Activated naive CD4-positive, alpha-beta T cell treated with anti-CD3 and anti-CD28 coated beads for 36 hours (primary cell): ENCODE measurements at regions of chr14 and their contacts with region 1.

Region 1: GRCh38 chr14:77023001-77023996 is 5.2 kb downstream of the IRF2BPL start:
- DNase-seq: peak; percentile 73
- H3K4me3 Mint-ChIP-seq: peak overlapping the region; percentile 26
- H3K27ac Mint-ChIP-seq: peak overlapping the region; percentile 86
- H3K4me1 Mint-ChIP-seq: peaks cover 49% of the 10 kb centered on the region
- H3K27me3 Mint-ChIP-seq: no peaks in the 10 kb centered on the region

Region 2: DNA sequence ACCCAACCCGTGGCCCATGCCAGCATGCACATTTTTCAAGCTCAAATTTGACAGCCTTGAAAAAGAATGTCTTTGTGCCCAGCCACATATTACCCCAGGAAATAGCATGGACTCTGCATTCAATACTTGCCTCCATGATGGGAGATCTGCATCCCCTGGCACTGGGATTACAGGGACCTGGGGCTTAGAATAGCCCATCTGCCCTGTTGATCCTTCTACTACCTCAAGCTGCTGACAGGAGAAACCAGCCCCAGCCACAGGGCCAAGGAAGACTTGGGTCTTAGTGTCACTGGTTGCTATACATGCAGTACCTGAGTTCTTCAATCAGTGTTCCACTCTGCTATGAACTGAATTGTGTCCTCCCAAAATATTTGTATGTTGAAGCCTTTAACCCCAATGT is 111.8 kb before region 1 on chr14:
- CTCF ChIA-PET with region 1: interaction called, 60 read pairs
- intact Hi-C with region 1: no loop called
- DNase-seq: no peak
- H3K4me3 Mint-ChIP-seq: no peak overlapping the region
- H3K27ac Mint-ChIP-seq: no peak overlapping the region
- H3K4me1 Mint-ChIP-seq: peaks cover 15% of the 10 kb centered on the region
- H3K27me3 Mint-ChIP-seq: no peaks in the 10 kb centered on the region

Region 3: DNA sequence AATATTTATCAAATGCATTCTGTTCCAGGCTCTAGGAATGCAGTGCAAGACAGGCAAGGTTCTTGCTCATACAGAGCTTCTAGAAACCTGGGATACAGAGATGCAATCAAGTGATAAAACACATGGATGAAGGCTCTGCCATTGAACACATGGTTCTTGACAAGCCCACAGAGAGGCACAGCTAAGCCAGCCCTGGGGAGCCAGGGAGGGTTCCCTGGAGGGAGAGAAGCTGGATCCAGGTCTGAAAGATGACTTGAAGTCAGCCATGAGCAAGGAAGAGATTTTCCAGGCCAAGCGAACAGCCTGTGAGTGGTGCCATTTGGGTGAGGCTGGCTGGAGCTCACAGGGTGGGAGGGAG is 61.0 kb before region 1 on chr14:
- CTCF ChIA-PET with region 1: interaction called, 16 read pairs
- intact Hi-C with region 1: loop called (anchors 1 kb)
- DNase-seq: no peak
- H3K4me3 Mint-ChIP-seq: peak overlapping the region; percentile 68
- H3K27ac Mint-ChIP-seq: peak overlapping the region; percentile 98
- H3K4me1 Mint-ChIP-seq: peaks cover 90% of the 10 kb centered on the region
- H3K27me3 Mint-ChIP-seq: no peaks in the 10 kb centered on the region

Region 4: GRCh38 chr14:76977793-76978720 is 45.2 kb before region 1 on chr14:
- CTCF ChIA-PET with region 1: interaction called, 3 read pairs
- intact Hi-C with region 1: loop called (anchors 1 kb)
- DNase-seq: peak; percentile 97
- H3K4me3 Mint-ChIP-seq: peak overlapping the region; percentile 71
- H3K27ac Mint-ChIP-seq: peak overlapping the region; percentile 95
- H3K4me1 Mint-ChIP-seq: peaks cover 28% of the 10 kb centered on the region
- H3K27me3 Mint-ChIP-seq: no peaks in the 10 kb centered on the region

Region 5: GRCh38 chr14:76995279-76996005 is 27.9 kb before region 1 on chr14:
- CTCF ChIA-PET with region 1: no interaction called
- intact Hi-C with region 1: loop called (anchors 2 kb)
- DNase-seq: peak; percentile 59
- H3K4me3 Mint-ChIP-seq: no peak overlapping the region
- H3K27ac Mint-ChIP-seq: peak overlapping the region; percentile 8
- H3K4me1 Mint-ChIP-seq: peaks cover 23% of the 10 kb centered on the region
- H3K27me3 Mint-ChIP-seq: no peaks in the 10 kb centered on the region

Region 6: GRCh38 chr14:77228056-77228455 is 204.8 kb after region 1 on chr14:
- CTCF ChIA-PET with region 1: no interaction called
- intact Hi-C with region 1: no loop called
- DNase-seq: no peak
- H3K4me3 Mint-ChIP-seq: no peak overlapping the region
- H3K27ac Mint-ChIP-seq: no peak overlapping the region
- H3K4me1 Mint-ChIP-seq: no peaks in the 10 kb centered on the region
- H3K27me3 Mint-ChIP-seq: no peaks in the 10 kb centered on the region